ENCODE measurements at regions of chr10 and their contacts with region 1.

Region 1: GRCh38 chr10:62019013-62019684 is 117.7 kb downstream of the ARID5B start:
- DNase-seq: no peak
- ATAC-seq: no peak

Region 2: GRCh38 chr10:61896854-61897661 is 122.1 kb before region 1 on chr10:
- intact Hi-C with region 1: loop called (anchors 2 kb)
- DNase-seq: peak; percentile 86
- ATAC-seq: peak; percentile 86

Region 3: DNA sequence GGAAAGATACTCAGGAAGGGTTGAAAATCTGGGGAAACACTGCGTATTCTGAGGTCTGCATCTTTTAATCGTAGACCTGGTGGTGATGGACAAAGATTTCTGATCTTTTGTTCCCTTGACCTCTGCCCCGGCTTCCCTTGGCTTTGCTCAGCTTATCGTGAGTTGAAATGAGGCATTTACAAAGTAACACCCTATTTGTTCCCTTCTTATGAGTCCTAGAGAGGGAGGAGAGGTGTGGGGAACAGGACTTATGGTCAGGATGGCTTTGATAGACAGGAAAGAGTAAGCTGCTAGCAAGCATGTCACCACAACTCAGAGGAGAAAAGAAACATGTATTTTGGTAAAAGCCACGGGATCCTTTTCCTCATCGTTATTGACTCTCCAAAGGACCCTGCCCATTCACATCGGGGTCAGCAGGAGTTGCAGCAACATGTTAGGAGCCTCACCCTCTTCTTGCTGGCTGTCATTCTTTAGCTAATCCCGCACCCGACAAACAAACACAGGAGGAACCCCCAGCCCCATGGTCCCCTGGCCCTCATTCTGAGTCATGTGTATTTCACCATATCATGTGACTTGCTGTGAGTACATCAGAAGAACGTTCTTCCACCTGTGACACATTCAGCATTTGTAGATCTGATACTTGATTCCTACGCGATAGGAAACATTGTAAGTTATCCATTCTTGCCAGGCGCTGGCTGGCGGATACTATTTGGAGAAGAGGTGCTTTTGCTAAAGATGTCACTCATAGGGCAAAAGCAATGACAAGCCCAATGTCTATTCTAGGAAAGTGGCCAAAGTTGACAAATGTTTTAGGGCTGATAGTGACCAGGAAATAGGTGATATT is 79.4 kb after region 1 on chr10:
- intact Hi-C with region 1: no loop called
- DNase-seq: no peak
- ATAC-seq: no peak